ENCODE measurements at regions of chr1 and their contacts with region 1.

Region 1: GRCh38 chr1:151254217-151255213 is at the start of gene PSMD4:
- DNase-seq: peak; percentile 93
- ATAC-seq: peak; percentile 98
- H3K4me3 ChIP-seq: peak within 1 kb of the TSS; percentile 60 to 68
- H3K27ac ChIP-seq: peak within 1 kb of the TSS; percentile 84
- H3K4me1 ChIP-seq: peaks cover 3% of the 10 kb centered on the region; the same call in 1 of the 2 replicates
- H3K27me3 ChIP-seq: no peaks in the 10 kb centered on the region
- CTCF ChIP-seq: no peak
- total RNA-seq, gene PSMD4: 256 TPM

Region 2: GRCh38 chr1:151198255-151199127 is 56.0 kb before region 1 on chr1 and contains the start of gene PIP5K1A:
- CTCF ChIA-PET with region 1: interaction called, 14 read pairs
- POLR2A ChIA-PET with region 1: interaction called, 3 read pairs
- in situ Hi-C with region 1: no loop called
- intact Hi-C with region 1: loop called (anchors 5 kb)
- DNase-seq: peak; percentile 92
- ATAC-seq: peak; percentile 81
- H3K4me3 ChIP-seq: peak within 1 kb of the TSS; percentile 94 to 100
- H3K27ac ChIP-seq: peak within 1 kb of the TSS; percentile 97
- H3K4me1 ChIP-seq: peaks cover 12% of the 10 kb centered on the region; the same call in 1 of the 2 replicates
- H3K27me3 ChIP-seq: no peaks in the 10 kb centered on the region
- CTCF ChIP-seq: no peak
- total RNA-seq, gene PIP5K1A: 78.9 TPM

Region 3: DNA sequence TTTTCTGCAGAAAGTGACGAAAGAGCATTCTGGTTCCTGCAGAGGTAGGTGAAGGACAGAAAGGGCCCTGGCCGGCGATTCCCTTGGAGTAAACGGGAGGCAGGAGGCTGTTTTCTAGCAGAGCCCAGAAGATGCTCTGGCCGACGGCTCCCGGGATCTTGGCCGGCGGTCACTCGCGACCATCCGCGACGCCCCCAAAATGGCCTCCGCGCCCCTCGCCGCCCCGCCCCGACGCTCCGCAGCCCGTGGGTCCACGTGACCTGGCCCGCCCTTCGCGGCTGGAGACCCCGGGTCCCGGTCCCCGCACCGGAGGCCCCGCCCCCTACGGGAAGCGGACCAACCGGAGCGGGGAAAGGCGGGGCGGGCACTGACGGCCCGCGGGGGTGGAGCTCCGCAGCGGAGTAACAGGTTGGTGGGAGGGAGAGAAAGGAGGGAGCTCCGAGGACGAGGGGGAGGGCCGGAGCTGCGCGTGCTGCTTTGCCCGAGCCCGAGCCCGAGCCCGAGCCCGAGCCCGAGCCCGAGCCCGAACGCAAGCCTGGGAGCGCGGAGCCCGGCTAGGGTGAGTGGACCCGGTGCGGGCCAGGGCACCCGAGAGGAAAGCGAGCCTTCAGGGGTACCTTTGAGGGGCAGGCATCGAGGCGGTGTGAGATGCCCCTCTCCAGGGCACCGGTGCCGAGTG is 256.6 kb after region 1 on chr1 and contains the start of gene CGN:
- CTCF ChIA-PET with region 1: no interaction called
- POLR2A ChIA-PET with region 1: interaction called, 10 read pairs
- in situ Hi-C with region 1: no loop called
- intact Hi-C with region 1: no loop called
- DNase-seq: no peak
- ATAC-seq: peak; percentile 97
- H3K4me3 ChIP-seq: peak within 1 kb of the TSS; percentile 50 to 80
- H3K27ac ChIP-seq: peak within 1 kb of the TSS; percentile 78
- H3K4me1 ChIP-seq: peaks cover 32% of the 10 kb centered on the region
- H3K27me3 ChIP-seq: no peaks in the 10 kb centered on the region
- CTCF ChIP-seq: no peak
- total RNA-seq, gene CGN: 10.2 TPM

Measured in Panc1 (cell line).